ENCODE measurements at regions of chr2 and their contacts with region 1.

Region 1: GRCh38 chr2:167212014-167212648 is 323.9 kb downstream of the XIRP2 start:
- H3K4me3 ChIP-seq: no peak overlapping the region
- H3K27ac ChIP-seq: no peak overlapping the region
- H3K4me1 ChIP-seq: no peaks in the 10 kb centered on the region
- CTCF ChIP-seq: no peak

Region 2: DNA sequence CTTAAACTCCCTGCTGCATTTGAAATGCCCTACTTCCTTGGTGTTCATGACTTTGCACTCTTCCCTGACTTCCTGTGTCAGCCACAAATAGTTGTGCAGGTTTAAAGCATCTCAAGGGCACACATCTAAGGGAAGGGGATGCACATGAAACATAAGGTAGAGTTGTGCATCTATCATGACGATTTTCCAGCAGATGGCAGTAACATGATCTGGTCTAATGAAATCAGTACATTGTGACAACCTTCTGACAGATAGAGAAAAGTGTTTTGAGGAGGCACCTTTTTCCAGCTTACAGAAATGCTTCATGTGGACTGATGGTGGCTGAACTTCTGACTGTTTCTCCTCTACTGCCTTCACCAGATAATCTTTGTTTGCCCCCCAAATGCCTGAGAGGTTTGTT is 85.0 kb before region 1 on chr2:
- CTCF ChIA-PET with region 1: interaction called, 14 read pairs
- POLR2A ChIA-PET with region 1: no interaction called
- H3K4me3 ChIP-seq: no peak overlapping the region
- H3K27ac ChIP-seq: no peak overlapping the region
- H3K4me1 ChIP-seq: no peaks in the 10 kb centered on the region
- CTCF ChIP-seq: no peak

Region 3: DNA sequence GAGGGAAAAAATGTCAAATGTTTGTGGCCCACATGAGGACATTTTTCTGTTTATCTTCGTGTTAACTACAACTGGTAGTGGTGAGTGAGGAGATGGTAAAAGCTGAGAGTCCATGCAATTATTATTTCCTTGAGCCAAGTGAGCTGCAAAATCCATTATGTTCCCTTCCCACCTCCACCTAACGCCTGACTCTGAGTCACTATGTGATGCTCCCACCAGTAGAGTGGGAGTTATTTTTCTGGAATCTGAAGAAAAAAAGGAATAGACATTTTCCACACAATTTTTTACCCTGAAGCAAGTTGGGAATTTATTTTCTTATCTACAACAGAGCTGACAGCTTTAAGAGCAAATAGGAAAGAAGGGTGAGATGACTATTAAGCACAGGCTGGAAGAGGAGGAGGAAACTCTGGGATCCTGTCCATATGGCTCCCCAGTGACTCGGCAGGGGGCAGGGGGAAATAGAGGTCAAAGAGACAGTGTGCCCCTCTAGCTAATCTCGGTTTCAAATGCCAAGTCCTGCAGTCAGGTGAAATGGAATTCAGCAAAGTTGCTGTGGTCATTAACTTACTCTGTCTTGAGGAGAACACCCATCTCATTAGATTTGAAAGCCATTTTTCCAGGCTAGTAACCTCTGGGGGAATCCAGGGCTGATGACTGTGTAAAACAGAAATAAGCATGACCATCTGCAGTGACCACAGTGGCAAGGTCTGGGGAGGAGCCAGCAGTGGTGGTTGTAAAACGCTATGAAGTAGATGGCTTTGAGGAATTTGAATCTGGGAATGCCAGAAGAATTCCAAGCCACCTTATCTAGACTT is 571.3 kb after region 1 on chr2:
- CTCF ChIA-PET with region 1: no interaction called
- POLR2A ChIA-PET with region 1: no interaction called
- H3K4me3 ChIP-seq: no peak overlapping the region
- H3K27ac ChIP-seq: no peak overlapping the region
- H3K4me1 ChIP-seq: peaks cover 8% of the 10 kb centered on the region; the same call in 1 of the 2 replicates
- CTCF ChIP-seq: no peak